Ascending aorta (tissue), 2 donors: ENCODE measurements at regions of chr3 and their contacts with region 1.

Region 1: DNA sequence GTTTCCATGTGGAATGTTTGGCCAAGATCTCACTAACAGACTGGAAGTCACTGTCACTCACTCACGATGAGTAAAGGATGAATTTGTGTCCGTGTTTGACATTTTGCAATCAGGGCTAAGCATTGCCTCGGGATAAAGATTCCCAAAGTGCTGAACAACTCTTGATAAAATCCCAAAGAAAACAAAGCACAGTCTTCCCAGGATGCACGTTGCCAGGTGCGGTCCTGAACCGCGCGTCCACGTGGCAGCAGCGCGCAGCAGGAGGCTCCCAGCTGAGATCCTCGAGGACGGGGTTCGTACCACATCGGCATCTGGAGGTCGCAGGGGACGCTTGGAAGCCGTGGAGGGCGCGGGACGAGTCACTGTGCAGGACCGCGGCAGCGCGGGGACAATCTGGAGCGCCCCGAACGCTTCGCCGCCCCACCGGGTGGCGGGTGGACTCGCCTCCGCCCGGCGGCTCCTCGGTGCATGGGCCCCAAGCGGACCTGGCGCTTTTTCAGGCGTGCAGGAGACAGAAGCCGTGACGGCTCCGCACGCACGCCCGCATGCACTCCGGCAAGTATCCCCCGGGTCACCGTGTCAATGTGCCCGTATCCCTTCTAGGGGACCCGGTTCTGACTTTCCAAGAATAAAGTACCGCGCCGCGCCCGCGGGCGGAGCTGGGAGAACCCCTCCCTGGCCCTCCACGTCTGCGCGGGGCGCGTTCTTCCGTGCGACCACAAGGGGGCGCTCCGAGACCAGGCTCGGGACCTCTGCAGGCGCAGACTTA is 17.7 kb downstream of the CPN2 start:
- DNase-seq: peak in 1 of 2 donors; percentile 90
- H3K4me3 ChIP-seq: peak overlapping the region; percentile 20 to 66
- H3K27ac ChIP-seq: no peak overlapping the region
- H3K4me1 ChIP-seq: peaks cover 0 to 5% of the 10 kb centered on the region in 2 donors
- H3K27me3 ChIP-seq: no peaks in the 10 kb centered on the region
- CTCF ChIP-seq: peak; percentile 96 to 98 (median 98)

Region 2: DNA sequence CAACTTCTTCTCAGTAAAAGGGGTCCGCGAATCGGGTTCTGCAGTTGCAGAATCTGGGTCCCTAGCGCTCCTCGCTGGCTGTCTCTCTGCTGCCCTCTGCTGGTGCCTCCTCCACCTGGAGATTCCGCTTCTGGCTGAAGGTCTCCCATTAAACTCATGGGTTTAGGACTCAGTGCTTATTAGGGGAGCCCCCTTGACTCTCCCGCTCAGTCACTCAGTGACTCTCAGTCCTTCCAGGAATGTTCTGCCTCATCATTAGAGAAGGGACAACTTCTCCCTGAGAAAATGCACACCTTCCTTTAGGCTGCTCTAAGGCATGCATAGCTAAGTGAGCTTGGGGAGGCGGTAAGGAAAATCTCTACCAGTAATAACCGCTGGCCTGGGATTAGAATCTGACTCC is 10.6 kb after region 1 on chr3:
- intact Hi-C with region 1: loop called (anchors 1 kb)
- DNase-seq: peak in 1 of 2 donors; percentile 85
- H3K4me3 ChIP-seq: no peak overlapping the region
- H3K27ac ChIP-seq: no peak overlapping the region
- H3K4me1 ChIP-seq: no peaks in the 10 kb centered on the region
- H3K27me3 ChIP-seq: no peaks in the 10 kb centered on the region
- CTCF ChIP-seq: peak; percentile 63 to 97 (median 89)

Region 3: DNA sequence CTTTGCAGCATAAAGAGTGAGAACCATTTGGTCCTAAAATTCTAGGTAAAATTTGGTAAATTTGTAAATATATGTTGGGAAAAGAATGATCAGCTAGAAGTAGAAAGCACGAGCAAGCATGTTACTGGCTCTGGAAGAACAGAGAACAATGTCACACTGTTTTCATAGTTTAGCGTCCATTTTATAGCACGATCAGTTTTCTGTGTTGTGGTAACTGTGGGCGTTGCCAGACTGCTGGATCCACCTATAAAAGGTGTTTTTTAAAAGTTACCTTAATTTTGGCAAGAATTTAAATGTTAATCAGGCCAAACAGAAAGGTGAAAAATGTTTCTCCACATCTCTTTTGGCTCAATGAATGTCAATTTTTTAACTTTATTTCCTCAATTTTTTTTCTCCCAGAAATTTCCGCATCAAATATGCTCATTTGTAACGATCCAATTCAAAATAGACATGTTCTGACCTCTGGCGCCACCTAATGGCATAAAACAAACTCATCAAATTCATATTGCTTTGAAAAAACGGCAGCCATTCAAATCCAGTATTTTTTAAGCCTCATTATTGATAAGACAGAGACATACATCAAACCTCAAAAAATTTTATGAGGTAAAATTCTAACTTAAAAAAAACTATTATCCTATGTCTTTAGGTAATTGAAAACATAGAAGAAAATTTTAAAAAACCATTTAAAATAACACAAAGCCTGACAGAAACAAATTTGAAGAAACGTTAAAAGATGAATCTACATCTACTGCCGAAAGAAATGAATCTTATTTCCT is 71.2 kb after region 1 on chr3:
- intact Hi-C with region 1: loop called (anchors 5 kb)
- DNase-seq: no peak
- H3K4me3 ChIP-seq: no peak overlapping the region
- H3K27ac ChIP-seq: no peak overlapping the region
- H3K4me1 ChIP-seq: no peaks in the 10 kb centered on the region
- H3K27me3 ChIP-seq: no peaks in the 10 kb centered on the region
- CTCF ChIP-seq: peak; percentile 48 to 64 (median 54)

Region 4: GRCh38 chr3:194592798-194593752 is 259.7 kb after region 1 on chr3:
- intact Hi-C with region 1: loop called (anchors 10 kb)
- DNase-seq: peak in 1 of 2 donors; percentile 83
- H3K4me3 ChIP-seq: no peak overlapping the region
- H3K27ac ChIP-seq: peak overlapping the region; percentile 72 to 83
- H3K4me1 ChIP-seq: peaks cover 2 to 12% of the 10 kb centered on the region in 2 donors
- H3K27me3 ChIP-seq: no peaks in the 10 kb centered on the region
- CTCF ChIP-seq: no peak